Heart right ventricle (tissue), 16 donors: ENCODE measurements at regions of chr4 and their contacts with region 1.

Region 1: DNA sequence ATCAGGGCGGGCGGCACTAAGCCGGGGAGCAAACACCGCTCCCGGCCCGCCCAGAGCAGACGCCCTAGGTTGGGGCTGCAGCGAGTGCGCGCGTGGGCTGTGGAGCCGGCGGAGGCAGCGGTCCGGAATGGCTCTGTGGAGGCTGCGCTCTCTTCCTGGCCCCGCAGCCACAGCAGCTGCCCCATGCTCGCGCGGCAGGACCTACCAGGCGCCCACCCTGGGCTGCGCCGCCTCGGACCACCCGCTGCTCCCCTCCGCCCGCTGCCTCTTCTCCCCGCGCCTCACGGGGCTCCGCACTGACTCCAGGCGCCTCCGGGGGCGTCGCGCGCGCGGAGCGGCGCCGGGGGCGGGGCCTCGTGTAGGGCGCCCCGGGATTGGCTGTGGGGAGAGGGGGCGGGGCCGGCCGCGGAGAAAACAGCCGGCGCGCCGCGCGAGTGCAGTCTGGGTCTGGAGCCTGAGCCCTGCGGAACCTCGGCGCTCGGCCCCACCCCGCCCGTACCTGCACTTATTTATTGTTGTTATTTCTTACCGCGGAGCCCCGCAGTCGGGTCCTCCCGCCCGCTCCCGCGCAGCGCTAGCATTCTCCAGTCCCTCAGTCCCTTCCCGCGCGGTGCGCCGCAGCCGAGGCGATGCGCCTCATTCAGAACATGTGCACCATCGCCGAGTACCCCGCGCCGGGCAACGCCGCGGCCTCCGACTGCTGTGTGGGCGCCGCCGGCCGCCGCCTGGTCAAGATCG is at the start of gene RASL11B:
- DNase-seq: peak; percentile 82 to 89
- ATAC-seq: peak; percentile 97 to 99 (median 98)
- H3K4me3 ChIP-seq: peak within 1 kb of the TSS; percentile 45 to 90 (median 70)
- H3K27ac ChIP-seq: peak within 1 kb of the TSS; percentile 5 to 90 (median 74)
- H3K4me1 ChIP-seq: peaks cover 0 to 56% (median 34%) of the 10 kb centered on the region in 9 donors
- H3K27me3 ChIP-seq: peaks cover 0 to 31% (median 0%) of the 10 kb centered on the region in 7 donors
- CTCF ChIP-seq: peak in 7 of 9 donors; percentile 20 to 56 (median 42)
- total RNA-seq, gene RASL11B: 1.2 to 16.5 (median 6.1) TPM

Region 2: GRCh38 chr4:52712172-52712990 is 149.7 kb before region 1 on chr4:
- intact Hi-C with region 1: loop called in 5 of 10 experiments (anchors 5 to 10 kb)
- DNase-seq: peak; percentile 98 to 99
- ATAC-seq: peak; percentile 98 to 100 (median 99)
- H3K4me3 ChIP-seq: peak overlapping the region; percentile 77 to 97 (median 88)
- H3K27ac ChIP-seq: peak overlapping the region; percentile 91 to 100 (median 96)
- H3K4me1 ChIP-seq: peaks cover 0 to 41% (median 29%) of the 10 kb centered on the region in 9 donors
- H3K27me3 ChIP-seq: no peaks in the 10 kb centered on the region
- CTCF ChIP-seq: no peak

Region 3: GRCh38 chr4:52721968-52722815 is 139.9 kb before region 1 on chr4:
- intact Hi-C with region 1: loop called in 7 of 10 experiments (anchors 5 to 10 kb)
- DNase-seq: peak; percentile 91 to 97
- ATAC-seq: peak; percentile 98 to 100 (median 99)
- H3K4me3 ChIP-seq: peak overlapping the region; percentile 67 to 96 (median 88)
- H3K27ac ChIP-seq: peak overlapping the region; percentile 63 to 93 (median 84)
- H3K4me1 ChIP-seq: peaks cover 0 to 15% (median 10%) of the 10 kb centered on the region in 9 donors
- H3K27me3 ChIP-seq: no peaks in the 10 kb centered on the region
- CTCF ChIP-seq: peak in 1 of 9 donors; percentile 34

Region 4: GRCh38 chr4:52957220-52957686 is 95.2 kb after region 1 on chr4:
- intact Hi-C with region 1: loop called in 2 of 10 experiments (anchors 10 kb)
- DNase-seq: peak in 1 of 2 donors; percentile 21
- ATAC-seq: peak; percentile 14 to 87 (median 70)
- H3K4me3 ChIP-seq: no peak overlapping the region
- H3K27ac ChIP-seq: peak overlapping the region in 9 of 10 donors; percentile 4 to 71 (median 57)
- H3K4me1 ChIP-seq: peaks cover 0 to 45% (median 20%) of the 10 kb centered on the region in 9 donors
- H3K27me3 ChIP-seq: no peaks in the 10 kb centered on the region
- CTCF ChIP-seq: no peak